HEK293 (cell line): ENCODE measurements at regions of chr17 and their contacts with region 1.

Region 1: DNA sequence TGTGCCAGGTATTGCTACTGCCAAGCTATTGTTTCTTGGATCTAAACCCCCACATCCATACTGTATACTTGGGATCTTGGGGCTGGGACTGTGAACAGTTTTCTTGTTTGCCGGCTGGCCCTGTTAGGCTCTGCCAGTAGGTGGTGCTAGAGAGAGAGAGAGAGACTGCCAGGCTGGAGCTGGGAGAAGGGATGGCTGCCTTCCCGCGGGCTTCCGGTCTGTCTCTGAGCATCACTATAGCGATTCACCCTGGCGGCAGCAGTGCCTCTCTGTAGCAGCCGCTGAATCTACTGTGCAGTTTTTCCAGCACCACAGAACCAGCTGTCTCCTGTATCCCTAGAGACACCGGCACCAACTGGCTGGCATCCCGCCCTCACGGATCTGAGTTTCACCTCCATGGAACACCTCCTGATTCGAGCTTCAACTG is 201.2 kb downstream of the UTP18 start:
- H3K4me3 ChIP-seq: no peak overlapping the region
- H3K27ac ChIP-seq: no peak overlapping the region
- H3K4me1 ChIP-seq: no peaks in the 10 kb centered on the region
- CTCF ChIP-seq: peak; percentile 76; the same call in 1 of the 2 replicates

Region 2: DNA sequence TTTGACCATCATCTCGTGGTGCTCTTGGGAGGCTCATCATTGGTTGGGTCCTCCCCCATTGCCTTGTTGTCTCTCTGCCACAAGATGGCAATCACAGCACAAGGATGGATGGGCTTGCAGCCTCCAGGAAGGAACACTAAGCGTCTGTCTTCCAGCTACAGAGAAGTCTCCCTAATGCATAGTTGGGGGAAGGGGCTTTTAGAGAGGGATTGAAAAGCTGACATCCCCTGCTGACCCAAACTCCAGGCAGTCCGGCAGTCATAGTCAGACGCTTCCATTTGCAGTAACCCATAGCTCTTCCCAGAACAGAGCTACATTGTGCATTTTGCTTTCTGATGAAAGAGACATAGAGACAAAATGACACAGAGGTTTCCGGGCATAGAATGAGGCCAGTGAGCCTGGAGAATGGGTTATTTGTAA is 89.8 kb before region 1 on chr17:
- CTCF ChIA-PET with region 1: interaction called, 26 read pairs
- POLR2A ChIA-PET with region 1: no interaction called
- H3K4me3 ChIP-seq: no peak overlapping the region
- H3K27ac ChIP-seq: no peak overlapping the region
- H3K4me1 ChIP-seq: no peaks in the 10 kb centered on the region
- CTCF ChIP-seq: peak; percentile 78

Region 3: GRCh38 chr17:51445946-51446533 is 15.6 kb before region 1 on chr17:
- CTCF ChIA-PET with region 1: interaction called, 41 read pairs
- POLR2A ChIA-PET with region 1: no interaction called
- H3K4me3 ChIP-seq: no peak overlapping the region
- H3K27ac ChIP-seq: no peak overlapping the region
- H3K4me1 ChIP-seq: no peaks in the 10 kb centered on the region
- CTCF ChIP-seq: no peak

Region 4: DNA sequence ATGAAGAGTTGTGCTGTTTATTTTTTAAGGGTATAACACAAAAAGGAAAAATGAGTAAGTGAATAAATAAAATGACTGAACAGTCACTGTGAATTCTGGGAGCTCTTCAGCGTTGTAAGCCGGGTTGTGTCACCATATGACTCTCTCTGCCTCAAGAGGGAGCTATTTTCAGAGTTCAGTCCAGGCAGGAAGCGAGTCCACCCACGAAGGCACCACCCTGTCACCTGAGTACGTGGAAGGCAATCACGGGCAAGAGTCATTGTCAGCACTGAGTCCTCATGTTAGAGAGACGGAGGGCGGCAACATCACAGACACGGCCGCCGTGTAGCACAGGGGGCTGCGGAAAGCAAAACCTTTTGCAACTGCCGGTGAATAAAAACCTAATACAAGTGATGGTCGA is 26.4 kb after region 1 on chr17:
- CTCF ChIA-PET with region 1: interaction called, 27 read pairs
- POLR2A ChIA-PET with region 1: no interaction called
- H3K4me3 ChIP-seq: no peak overlapping the region
- H3K27ac ChIP-seq: no peak overlapping the region
- H3K4me1 ChIP-seq: no peaks in the 10 kb centered on the region
- CTCF ChIP-seq: no peak

Region 5: GRCh38 chr17:51640108-51640622 is 178.6 kb after region 1 on chr17:
- CTCF ChIA-PET with region 1: interaction called, 16 read pairs
- POLR2A ChIA-PET with region 1: no interaction called
- H3K4me3 ChIP-seq: no peak overlapping the region
- H3K27ac ChIP-seq: no peak overlapping the region
- H3K4me1 ChIP-seq: peaks cover 17% of the 10 kb centered on the region
- CTCF ChIP-seq: peak; percentile 53; the same call in 1 of the 2 replicates